Panc1 (cell line): ENCODE measurements at regions of chr19 and their contacts with region 1.

Region 1: GRCh38 chr19:4471403-4472173 is 509 bp upstream of the HDGFL2 start:
- DNase-seq: peak; percentile 99
- ATAC-seq: peak; percentile 93
- H3K4me3 ChIP-seq: peak overlapping the region; percentile 83 to 86
- H3K27ac ChIP-seq: peak overlapping the region; percentile 90
- H3K4me1 ChIP-seq: no peaks in the 10 kb centered on the region; the same call in 1 of the 2 replicates
- H3K27me3 ChIP-seq: no peaks in the 10 kb centered on the region
- CTCF ChIP-seq: no peak

Region 2: GRCh38 chr19:4415352-4415751 is 56.2 kb before region 1 on chr19:
- CTCF ChIA-PET with region 1: no interaction called
- POLR2A ChIA-PET with region 1: interaction called, 10 read pairs
- in situ Hi-C with region 1: no loop called
- intact Hi-C with region 1: no loop called
- DNase-seq: no peak
- ATAC-seq: no peak
- H3K4me3 ChIP-seq: no peak overlapping the region
- H3K27ac ChIP-seq: no peak overlapping the region
- H3K4me1 ChIP-seq: no peaks in the 10 kb centered on the region
- H3K27me3 ChIP-seq: no peaks in the 10 kb centered on the region
- CTCF ChIP-seq: no peak

Region 3: DNA sequence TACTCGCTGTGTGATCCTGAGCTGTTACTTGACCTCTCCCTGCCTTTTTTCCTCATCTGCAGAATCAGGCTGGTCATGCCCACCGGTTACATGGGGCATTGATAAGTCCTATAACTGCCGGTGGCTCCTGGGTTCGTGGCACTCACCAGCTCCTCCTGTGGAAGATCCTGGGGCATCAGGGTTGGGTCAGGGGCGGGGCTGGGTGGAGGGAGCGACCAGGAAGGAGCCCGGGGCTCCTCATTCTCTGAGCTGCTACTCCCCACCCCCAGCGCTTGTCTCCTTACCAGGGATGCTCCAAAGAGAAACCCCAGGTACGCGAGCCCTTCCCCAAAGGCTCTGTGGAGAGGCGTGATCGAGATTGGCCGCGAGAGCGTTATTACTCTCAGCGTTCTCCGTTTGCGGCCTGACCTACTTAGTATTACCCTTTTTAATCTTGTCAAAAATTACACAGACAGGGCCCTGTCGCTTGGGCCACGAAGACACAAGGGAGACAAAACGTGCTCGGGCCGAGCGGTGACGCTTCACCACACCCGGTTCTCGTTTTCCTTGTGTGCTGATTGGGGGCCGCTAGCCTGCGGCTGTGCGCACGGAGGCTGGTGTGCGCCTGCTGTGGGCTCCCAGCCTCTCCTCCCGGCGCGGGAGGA is 11.3 kb after region 1 on chr19:
- CTCF ChIA-PET with region 1: no interaction called
- POLR2A ChIA-PET with region 1: no interaction called
- in situ Hi-C with region 1: no loop called
- intact Hi-C with region 1: no loop called
- DNase-seq: no peak
- ATAC-seq: no peak; the same call in 1 of the 2 replicates
- H3K4me3 ChIP-seq: no peak overlapping the region
- H3K27ac ChIP-seq: no peak overlapping the region
- H3K4me1 ChIP-seq: no peaks in the 10 kb centered on the region
- H3K27me3 ChIP-seq: no peaks in the 10 kb centered on the region
- CTCF ChIP-seq: no peak

Region 4: DNA sequence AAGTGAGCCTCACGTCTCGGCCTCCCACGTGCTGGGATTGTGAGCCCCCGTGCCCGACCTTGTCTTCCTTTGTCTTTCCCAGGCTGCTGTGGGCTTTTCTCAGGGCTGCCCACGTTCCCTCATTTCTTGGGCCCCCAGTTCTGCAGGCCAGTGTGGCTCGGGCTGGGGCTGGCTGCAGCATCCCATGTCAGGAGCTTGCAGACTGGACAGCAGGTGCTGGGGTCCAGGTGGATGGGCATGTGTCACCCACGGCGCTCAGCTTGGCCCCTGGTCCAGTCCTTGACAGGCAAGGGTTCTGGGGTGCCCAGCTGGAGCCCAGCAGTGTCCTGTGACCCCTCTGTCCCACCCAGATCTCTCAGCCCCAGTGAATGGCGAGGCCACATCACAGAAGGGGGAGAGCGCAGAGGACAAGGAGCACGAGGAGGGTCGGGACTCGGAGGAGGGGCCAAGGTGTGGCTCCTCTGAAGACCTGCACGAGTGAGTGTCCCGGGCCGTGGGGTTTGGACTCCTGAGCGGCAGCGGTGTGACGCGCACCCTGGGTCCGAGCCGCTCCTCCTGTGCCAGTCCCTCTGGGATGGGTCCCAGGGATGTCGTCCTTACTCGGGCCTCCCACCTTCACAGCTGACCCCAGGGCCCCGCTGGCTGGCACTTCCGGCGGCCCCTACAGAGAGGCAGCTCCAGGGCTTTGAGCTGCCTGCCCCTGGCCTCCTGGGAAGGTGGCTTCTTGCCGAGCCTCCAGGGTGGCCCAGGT is 29.4 kb after region 1 on chr19:
- CTCF ChIA-PET with region 1: no interaction called
- POLR2A ChIA-PET with region 1: no interaction called
- in situ Hi-C with region 1: no loop called
- intact Hi-C with region 1: no loop called
- DNase-seq: no peak
- ATAC-seq: no peak
- H3K4me3 ChIP-seq: no peak overlapping the region
- H3K27ac ChIP-seq: no peak overlapping the region
- H3K4me1 ChIP-seq: no peaks in the 10 kb centered on the region
- H3K27me3 ChIP-seq: no peaks in the 10 kb centered on the region
- CTCF ChIP-seq: no peak